Gastrocnemius medialis (tissue), 4 donors: ENCODE measurements at regions of chr19 and their contacts with region 1.

Region 1: GRCh38 chr19:46030812-46031550 is 8.1 kb upstream of the PGLYRP1 start:
- DNase-seq: no peak
- ATAC-seq: no peak
- H3K4me3 ChIP-seq: no peak overlapping the region
- H3K27ac ChIP-seq: no peak overlapping the region
- H3K4me1 ChIP-seq: no peaks in the 10 kb centered on the region
- H3K27me3 ChIP-seq: peaks cover 0 to 19% (median 7%) of the 10 kb centered on the region in 3 donors
- CTCF ChIP-seq: no peak
- POLR2A ChIP-seq: no peak

Region 2: DNA sequence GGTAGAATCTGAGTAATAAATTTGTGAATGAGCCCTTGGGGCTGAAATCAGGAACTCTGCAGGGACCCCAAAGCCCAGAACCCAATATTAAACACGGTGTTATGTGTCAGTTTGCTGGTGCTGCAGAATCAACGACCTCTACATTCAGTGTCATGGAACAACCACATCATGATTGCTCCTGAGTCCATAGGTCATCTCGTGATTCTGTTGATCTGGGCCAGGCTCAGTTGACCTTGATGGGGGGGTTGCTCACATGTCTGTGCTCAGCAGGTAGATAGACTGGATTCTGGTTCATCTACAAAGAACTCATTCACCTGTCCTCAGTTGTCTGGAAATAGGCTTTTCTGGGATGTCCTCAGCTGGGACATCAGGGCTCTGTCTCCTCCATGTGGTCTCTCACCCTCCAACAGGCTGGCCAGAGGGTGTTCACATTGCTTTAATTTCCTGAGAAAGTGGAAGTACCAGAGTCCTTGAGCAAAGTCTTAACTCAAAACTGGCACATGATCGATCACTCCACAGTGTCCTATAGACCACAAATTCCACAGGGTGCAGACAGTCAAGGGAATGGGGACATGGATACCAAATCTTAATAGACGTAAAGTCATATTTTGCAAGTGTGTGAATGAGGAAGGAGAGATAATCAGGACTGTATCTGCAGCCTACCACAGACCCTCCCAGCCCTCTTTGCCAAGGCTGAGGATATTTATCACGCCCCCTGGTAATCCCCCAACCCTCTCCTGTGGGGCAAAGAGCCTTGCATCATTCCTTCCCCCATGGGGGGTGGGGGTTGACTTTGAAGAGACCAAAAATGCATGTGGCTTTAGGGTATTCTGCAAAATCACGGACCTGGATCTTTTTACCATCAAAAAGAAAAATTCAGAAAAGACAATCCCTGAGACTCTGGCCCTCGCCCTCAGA is 159.2 kb after region 1 on chr19:
- in situ Hi-C with region 1: no loop called
- intact Hi-C with region 1: loop called (anchors 2 kb)
- DNase-seq: no peak
- ATAC-seq: no peak
- H3K4me3 ChIP-seq: no peak overlapping the region
- H3K27ac ChIP-seq: no peak overlapping the region
- H3K4me1 ChIP-seq: peaks cover 0 to 12% of the 10 kb centered on the region in 2 donors
- H3K27me3 ChIP-seq: peaks cover 3 to 16% (median 16%) of the 10 kb centered on the region in 3 donors
- CTCF ChIP-seq: no peak
- POLR2A ChIP-seq: no peak

Region 3: DNA sequence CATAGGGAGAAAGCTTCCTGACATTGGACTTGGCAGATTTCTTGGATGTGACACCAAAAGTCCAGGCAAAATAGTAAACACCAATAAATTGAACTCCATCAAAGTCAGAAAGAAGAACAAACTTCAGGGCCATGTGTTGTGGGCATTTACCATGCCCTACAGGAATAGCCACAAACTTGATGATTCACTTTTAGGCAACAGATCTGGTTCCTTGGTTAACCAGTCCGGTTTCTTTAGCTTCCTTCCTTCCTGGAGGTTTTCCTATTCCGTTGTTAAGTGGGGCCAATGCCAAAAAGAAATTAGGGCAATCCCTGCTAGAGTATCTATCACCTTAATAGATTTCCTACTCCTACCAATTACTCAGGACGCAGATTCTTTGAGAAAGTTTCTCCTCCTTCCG is 223.8 kb after region 1 on chr19:
- in situ Hi-C with region 1: no loop called
- intact Hi-C with region 1: no loop called
- DNase-seq: no peak
- ATAC-seq: no peak
- H3K4me3 ChIP-seq: no peak overlapping the region
- H3K27ac ChIP-seq: no peak overlapping the region
- H3K4me1 ChIP-seq: no peaks in the 10 kb centered on the region
- H3K27me3 ChIP-seq: peaks cover 0 to 18% (median 15%) of the 10 kb centered on the region in 3 donors
- CTCF ChIP-seq: no peak
- POLR2A ChIP-seq: no peak

Region 4: DNA sequence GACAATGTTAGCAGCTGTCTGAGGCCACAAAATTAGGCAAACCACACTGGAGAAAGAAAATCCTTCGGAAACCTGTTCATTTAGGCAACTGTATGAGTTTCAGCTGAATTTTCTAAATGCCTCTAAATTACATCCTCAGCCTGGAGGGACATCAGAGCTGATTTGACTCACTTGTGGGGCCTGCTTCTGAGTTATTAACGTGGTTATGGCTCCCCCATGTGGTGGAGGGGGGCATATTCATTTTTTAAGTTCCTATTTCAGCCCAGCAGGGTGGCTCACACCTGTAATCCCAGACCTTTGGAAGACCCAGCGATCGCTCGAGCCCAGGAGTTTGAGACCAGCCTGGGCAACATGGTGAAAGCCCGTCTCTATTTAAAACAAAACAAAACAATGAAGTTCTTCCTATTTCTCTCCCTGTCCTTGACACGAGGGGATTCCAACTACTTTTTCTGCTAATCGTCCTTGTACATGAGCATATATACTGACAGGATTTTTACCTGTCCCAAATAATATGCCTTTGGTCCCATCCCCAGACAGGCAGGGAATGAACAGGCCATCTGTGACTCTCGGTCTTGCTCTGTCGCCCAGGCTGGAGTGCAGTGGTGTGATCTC is 234.3 kb after region 1 on chr19:
- in situ Hi-C with region 1: loop called (anchors 5 to 10 kb)
- intact Hi-C with region 1: loop called (anchors 1 kb)
- DNase-seq: peak; percentile 20 to 40
- ATAC-seq: peak; percentile 76 to 79
- H3K4me3 ChIP-seq: no peak overlapping the region
- H3K27ac ChIP-seq: no peak overlapping the region
- H3K4me1 ChIP-seq: no peaks in the 10 kb centered on the region
- H3K27me3 ChIP-seq: peaks cover 4 to 7% (median 6%) of the 10 kb centered on the region in 3 donors
- CTCF ChIP-seq: peak; percentile 74 to 84 (median 79)
- POLR2A ChIP-seq: no peak